ENCODE measurements at regions of chr17 and their contacts with region 1.

Region 1: DNA sequence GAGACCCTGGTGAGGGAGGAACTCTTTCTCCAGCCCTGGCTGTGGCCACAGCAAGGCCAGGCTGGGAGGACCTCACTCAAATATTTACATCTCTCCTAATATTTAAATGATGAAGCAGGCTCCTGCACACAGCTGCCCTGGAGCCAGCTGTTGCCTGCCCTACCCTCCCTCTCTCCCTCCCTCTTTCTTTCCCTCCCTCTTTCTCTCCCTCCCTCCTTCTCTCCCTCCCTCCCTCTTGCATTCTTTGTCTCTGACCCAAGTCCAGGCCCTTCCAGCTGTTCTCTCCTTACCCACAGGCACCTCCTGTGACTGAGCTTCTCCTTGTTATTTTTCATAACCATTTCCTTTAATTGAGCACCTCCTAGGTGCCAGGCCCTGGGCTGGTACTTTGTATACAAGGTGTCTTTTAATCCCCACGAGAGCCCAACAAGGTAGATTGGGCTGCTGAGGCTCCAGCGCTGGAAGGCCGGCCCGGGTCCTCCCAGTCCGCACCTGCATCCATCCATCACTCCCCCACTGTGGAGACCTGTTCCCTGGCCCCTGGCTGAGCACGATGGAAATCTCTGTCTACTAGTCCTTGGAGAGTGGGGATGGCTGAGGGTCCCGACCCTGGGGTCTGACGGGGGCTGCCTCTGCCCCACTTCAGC is 242.3 kb downstream of the SEC14L1 start:
- DNase-seq: no peak
- H3K4me3 ChIP-seq: peak overlapping the region in 1 of 4 experiments; percentile 37; a peak in 2 of 8 replicates
- H3K27ac ChIP-seq: no peak overlapping the region
- H3K4me1 ChIP-seq: peaks cover 0 to 60% (median 40%) of the 10 kb centered on the region in 4 experiments; a peak in 6 of 7 replicates
- H3K27me3 ChIP-seq: no peaks in the 10 kb centered on the region
- CTCF ChIP-seq: no peak
- EP300 ChIP-seq: no peak
- POLR2A ChIP-seq: no peak
- RAD21 ChIP-seq: no peak

Region 2: DNA sequence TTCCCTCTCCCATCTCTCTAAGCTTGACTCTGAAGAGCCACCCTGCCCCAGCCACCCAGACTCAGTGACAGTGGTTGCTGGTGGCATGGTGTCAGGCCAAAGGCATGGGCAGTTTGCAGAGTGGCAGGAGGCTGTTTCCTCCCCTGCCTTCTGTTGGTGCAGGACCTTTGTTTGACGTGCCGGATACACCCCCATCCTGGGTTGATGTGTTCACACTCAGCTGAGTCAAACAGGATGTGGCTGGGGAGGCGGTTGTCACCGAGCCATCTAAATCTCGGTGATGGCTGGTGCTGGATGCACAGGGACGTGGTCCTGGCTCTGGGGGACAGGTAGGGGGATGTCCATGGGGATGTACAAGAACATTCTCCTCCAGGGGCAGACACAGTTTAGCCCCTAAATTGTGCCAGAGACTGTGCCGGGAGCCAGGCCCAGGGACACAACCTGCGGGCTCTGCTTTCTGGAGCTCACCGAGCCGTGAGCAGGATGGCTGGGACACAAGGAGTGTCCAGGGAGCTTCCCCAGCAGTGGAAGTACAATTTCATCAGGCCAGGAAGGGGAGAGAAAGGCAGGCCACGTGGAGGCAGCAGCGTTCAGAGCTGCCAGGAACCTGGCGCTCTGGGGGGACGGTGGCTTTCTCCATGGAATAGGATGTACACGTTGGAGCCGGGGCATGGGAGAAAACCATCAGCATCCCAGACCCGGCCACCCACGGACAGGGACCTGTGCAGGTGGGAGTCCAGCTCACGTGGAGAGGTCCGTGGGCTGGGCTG is 21.9 kb after region 1 on chr17:
- CTCF ChIA-PET with region 1: interaction called, 30 read pairs
- POLR2A ChIA-PET with region 1: interaction called, 6 read pairs
- DNase-seq: no peak
- H3K4me3 ChIP-seq: no peak overlapping the region
- H3K27ac ChIP-seq: no peak overlapping the region
- H3K4me1 ChIP-seq: peaks cover 6 to 25% (median 15%) of the 10 kb centered on the region in 4 experiments
- H3K27me3 ChIP-seq: no peaks in the 10 kb centered on the region
- CTCF ChIP-seq: no peak
- EP300 ChIP-seq: no peak
- POLR2A ChIP-seq: no peak
- RAD21 ChIP-seq: no peak

Measured in H1 (cell line).